ENCODE measurements at regions of chr3 and their contacts with region 1.

Region 1: DNA sequence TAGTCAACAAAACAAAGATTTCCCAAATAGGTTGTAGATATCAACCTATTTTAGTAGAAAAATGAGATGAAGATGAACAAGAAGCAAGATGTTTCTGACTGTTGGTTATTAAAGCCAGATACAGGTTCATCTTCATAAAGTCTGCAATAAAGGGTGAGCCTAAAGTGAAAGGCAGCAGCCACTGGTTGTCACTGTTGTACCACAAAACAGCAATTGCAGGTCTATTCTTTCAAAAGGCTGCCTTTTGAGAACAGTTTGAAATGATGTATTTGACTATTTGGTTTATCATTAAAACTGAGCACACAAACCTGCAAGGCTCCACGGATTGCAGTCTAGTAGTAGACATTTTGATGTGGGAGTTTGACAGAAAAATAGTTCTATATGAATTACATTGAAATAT is 543.4 kb downstream of the GBE1 start:
- DNase-seq: peak; percentile 73
- ATAC-seq: peak; percentile 65
- H3K4me3 ChIP-seq: no peak overlapping the region
- H3K27ac ChIP-seq: no peak overlapping the region
- H3K4me1 ChIP-seq: peaks cover 19% of the 10 kb centered on the region
- H3K27me3 ChIP-seq: no peaks in the 10 kb centered on the region
- CTCF ChIP-seq: peak; percentile 87

Region 2: DNA sequence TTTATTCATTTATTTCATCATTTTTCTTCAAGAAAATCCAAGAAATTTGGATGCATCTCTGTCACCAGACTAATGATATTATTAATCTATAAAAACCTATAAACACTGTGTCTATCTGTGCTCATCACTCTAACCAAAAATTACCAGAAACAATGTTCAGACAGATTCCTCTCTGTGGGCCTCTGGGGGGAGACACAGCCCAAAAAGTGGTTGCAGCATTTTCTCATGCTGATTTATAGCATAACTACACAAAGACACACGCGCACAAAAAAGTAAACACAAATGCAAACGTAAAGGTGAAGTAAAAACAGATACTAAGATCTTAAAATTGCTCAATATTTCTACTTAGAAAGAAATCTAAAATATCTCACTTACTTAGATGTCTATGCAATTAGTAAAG is 432.6 kb before region 1 on chr3:
- CTCF ChIA-PET with region 1: no interaction called
- POLR2A ChIA-PET with region 1: no interaction called
- intact Hi-C with region 1: loop called (anchors 1 kb)
- DNase-seq: peak; percentile 58
- ATAC-seq: peak; percentile 94
- H3K4me3 ChIP-seq: no peak overlapping the region
- H3K27ac ChIP-seq: no peak overlapping the region
- H3K4me1 ChIP-seq: peaks cover 9% of the 10 kb centered on the region; the same call in 1 of the 2 replicates
- H3K27me3 ChIP-seq: no peaks in the 10 kb centered on the region
- CTCF ChIP-seq: peak; percentile 87

Region 3: DNA sequence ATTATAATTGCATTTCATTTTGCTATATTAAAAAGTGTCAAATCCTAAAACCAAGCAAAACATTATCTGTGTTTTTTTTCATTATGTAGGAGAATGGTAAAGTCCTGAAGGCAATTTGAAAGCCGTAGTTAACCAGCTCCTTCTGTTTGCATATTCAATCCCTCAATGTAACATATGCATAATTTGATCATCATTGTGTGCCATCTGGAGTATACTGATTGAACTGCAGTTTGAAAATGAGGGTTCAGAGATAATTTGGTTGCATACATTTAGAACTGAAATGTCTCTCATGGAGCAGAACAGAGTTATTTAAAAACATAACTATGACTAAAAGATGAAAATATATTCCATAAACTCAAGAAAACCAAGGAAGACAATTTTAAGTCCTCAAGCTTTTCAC is 24.8 kb after region 1 on chr3:
- CTCF ChIA-PET with region 1: interaction called, 7 read pairs
- POLR2A ChIA-PET with region 1: no interaction called
- intact Hi-C with region 1: loop called (anchors 1 kb)
- DNase-seq: peak; percentile 70
- ATAC-seq: peak; percentile 65
- H3K4me3 ChIP-seq: no peak overlapping the region
- H3K27ac ChIP-seq: no peak overlapping the region
- H3K4me1 ChIP-seq: no peaks in the 10 kb centered on the region
- H3K27me3 ChIP-seq: no peaks in the 10 kb centered on the region
- CTCF ChIP-seq: peak; percentile 82

Region 4: DNA sequence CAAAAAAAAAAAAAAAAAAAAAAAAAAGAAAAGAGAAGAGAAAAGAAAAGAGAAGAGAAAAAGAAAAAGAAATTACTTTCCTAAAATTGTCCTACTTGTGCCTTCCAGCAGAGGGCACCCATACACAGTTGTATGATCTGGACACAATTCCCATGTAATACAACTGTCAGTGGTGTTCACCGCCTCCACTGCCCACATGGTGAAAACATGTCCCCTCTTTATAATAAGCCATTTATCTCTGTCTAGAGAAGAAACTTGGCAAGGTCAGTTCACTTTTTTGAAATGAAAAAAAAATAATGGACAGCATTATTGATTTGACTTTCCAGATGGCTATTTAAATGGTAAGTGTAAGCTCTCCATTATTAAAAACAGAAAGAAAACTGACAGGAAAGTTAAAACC is 84.0 kb after region 1 on chr3:
- CTCF ChIA-PET with region 1: no interaction called
- POLR2A ChIA-PET with region 1: no interaction called
- intact Hi-C with region 1: loop called (anchors 2 kb)
- DNase-seq: peak; percentile 68
- ATAC-seq: peak; percentile 64
- H3K4me3 ChIP-seq: no peak overlapping the region
- H3K27ac ChIP-seq: no peak overlapping the region
- H3K4me1 ChIP-seq: peaks cover 20% of the 10 kb centered on the region
- H3K27me3 ChIP-seq: no peaks in the 10 kb centered on the region
- CTCF ChIP-seq: peak; percentile 77

Region 5: DNA sequence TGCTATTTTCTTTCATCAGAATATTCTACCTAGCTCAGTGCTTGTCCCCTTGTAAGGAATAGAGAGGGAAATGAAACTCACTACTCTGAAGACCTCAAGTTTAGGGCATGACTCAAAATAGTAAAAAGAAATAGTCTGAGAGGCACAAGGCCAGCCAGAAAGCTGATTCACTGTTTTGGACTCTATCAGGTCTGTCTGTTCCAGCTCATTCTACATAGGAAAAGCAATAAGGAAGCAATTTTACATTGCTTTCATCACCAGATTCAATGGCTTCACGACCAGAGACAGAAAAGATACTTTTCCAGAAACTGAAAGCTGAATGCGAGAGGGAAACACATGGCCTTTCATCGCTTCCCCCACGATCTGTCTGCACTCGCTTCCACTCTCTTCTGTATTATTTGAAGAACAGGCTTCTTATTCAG is 267.4 kb after region 1 on chr3:
- CTCF ChIA-PET with region 1: no interaction called
- POLR2A ChIA-PET with region 1: no interaction called
- intact Hi-C with region 1: loop called (anchors 1 kb)
- DNase-seq: peak; percentile 73
- ATAC-seq: peak; percentile 98
- H3K4me3 ChIP-seq: no peak overlapping the region
- H3K27ac ChIP-seq: no peak overlapping the region
- H3K4me1 ChIP-seq: peaks cover 5% of the 10 kb centered on the region
- H3K27me3 ChIP-seq: no peaks in the 10 kb centered on the region
- CTCF ChIP-seq: no peak

Measured in PC-3 (cell line).